Aorta (tissue), 5 donors: ENCODE measurements at regions of chr5 and their contacts with region 1.

Region 1: DNA sequence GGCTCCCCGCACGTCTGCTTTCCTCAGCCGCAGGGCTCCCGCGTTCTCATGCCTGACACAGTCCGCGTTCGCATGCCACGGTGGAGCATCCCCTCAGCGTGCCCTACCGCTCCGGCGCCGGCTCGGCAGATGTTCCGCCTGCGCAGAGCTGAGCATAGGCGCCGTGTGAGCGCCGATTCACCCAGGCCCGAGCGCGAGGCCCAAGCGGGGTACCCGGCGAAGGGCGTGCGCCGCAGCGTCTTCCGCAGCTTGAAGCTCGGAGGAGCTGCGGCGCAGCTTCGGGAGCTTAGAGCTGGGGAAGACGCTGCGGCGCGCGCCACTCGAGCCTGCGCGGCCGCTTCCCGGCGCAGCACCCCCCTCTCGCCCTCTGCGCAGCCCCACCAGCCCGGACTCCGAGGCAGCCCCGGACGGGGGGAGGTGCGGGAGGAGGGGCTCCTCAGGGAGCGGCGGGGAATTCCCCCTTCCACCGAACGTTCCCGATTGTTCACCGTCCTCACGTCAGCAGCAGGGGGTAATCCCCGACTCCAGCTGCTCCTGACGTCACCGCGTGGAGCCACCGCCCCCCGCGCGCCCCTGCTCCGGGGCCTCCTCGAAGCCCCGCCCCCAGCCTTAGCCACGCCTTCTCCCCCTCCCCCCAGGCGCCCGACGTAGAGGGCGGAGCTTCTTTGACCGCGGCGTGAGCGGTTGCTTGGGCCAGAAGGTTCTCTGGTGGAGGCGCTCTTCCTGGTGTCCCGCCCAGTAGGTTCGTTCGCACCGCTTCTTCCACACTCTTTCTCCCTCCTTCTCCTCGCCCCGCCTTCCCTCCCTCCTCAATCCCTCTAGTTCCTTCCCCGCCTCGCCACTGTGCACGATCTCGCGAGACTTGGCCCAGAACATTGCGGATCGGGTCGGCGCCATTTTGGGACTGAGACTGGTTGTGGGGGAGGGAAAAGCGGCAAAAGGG is at the start of gene GPBP1:
- DNase-seq: peak; percentile 100
- ATAC-seq: peak; percentile 98
- H3K4me3 ChIP-seq: peak within 1 kb of the TSS; percentile 60 to 80
- H3K27ac ChIP-seq: peak within 1 kb of the TSS; percentile 70 to 78
- H3K4me1 ChIP-seq: no peaks in the 10 kb centered on the region
- H3K27me3 ChIP-seq: no peaks in the 10 kb centered on the region
- total RNA-seq, gene GPBP1: 63.0 to 79.0 TPM

Region 2: DNA sequence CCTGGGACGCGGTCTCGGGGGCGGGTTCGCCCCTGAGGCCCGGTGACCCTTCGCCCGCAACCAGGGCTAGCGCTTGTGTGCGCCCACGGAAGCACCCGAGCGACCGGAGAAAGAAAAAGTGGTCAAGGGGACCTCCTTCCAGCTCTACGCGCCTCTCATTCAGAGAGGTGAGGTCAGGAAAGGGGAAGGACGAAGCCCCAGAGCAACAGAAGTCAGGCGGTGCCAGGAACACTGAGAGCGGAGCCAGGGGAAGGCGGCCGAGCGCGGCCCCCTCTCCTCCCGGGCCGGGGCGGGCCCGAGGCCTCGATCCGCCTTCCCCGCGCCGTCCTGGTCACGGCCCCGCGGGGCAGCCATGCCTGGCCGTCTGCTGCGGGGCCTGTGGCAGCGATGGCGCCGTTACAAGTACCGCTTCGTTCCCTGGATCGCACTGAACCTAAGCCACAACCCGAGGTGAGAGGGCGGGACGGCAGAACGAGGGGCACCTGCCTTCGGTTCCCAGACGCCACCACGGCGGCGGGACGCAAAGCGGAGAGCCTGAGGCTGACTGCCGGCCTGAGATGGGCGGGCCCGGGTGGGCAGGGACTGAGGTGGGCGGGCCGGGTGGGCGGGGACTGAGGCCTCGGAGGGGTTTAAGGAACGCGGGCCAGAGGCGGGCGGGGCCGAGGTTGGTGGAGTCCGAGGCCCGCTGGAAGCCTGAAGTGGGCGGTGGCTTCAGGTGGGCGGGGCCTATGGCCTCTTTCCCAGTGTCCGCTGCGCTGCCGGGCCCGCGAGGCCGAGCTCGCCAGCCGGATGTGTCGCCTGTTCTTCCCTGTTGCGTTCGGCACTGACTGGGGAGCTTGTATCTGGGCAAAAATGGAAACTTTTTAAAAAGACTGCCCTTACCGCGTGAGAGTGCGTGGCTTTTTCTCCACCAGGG is 263.9 kb before region 1 on chr5 and contains the start of gene SETD9:
- intact Hi-C with region 1: loop called in 1 of 2 experiments (anchors 1 kb)
- DNase-seq: peak; percentile 99 to 100
- ATAC-seq: peak; percentile 99
- H3K4me3 ChIP-seq: peak within 1 kb of the TSS; percentile 65 to 70
- H3K27ac ChIP-seq: peak within 1 kb of the TSS; percentile 38 to 96
- H3K4me1 ChIP-seq: no peaks in the 10 kb centered on the region
- H3K27me3 ChIP-seq: no peaks in the 10 kb centered on the region
- total RNA-seq, gene SETD9: 8.1 to 8.6 TPM

Region 3: GRCh38 chr5:57225553-57225952 is 52.1 kb after region 1 on chr5:
- intact Hi-C with region 1: no loop called
- DNase-seq: no peak
- ATAC-seq: no peak
- H3K4me3 ChIP-seq: no peak overlapping the region
- H3K27ac ChIP-seq: no peak overlapping the region
- H3K4me1 ChIP-seq: no peaks in the 10 kb centered on the region
- H3K27me3 ChIP-seq: no peaks in the 10 kb centered on the region